ENCODE measurements at regions of chr16 and their contacts with region 1.

Region 1: DNA sequence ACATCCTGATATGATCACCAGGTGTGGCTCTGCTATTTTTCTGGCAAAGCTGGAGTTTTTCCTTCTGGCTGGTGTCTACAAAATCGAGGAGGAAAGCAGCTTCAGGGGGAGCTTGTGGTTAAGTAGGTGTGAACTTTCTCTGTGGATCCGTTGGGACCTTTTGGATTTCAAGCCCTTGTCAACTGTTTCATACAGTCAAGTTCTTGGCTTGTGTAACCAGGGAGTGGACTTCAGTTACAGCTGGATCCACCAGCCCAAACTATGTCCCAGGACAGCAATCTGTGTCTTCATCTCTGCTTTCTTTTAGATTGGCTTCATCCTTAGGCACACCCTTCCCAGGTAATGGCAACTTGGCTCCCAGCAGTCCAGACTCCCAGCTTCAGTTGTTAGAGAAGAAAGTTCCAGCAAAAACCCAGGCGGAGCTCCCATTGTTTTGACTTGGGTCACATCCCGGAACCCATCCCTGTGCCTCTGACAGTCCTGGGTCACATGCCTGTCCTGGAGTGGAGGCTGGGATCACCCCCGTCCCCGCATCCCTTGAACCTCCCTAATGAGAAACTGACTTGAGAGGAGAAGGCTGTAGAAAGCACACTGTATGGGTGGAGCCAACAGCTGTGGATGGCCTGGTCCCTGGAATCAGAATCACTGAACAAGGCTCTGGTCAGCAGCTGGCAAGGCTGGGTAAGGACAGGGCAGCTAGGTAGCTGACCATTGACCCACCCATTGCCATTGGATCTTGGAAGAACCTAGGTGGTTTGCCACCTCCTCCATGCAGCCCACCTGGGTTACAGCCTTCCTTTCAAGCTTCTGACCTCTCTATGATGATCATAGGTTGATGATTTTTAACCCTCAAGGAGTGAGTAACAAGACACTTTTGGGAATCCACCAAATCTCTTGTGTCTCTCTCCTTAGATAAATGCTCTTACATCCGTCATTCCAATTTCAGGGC is 18.1 kb downstream of the NKD1 start:
- DNase-seq: no peak
- H3K4me3 ChIP-seq: no peak overlapping the region
- H3K27ac ChIP-seq: no peak overlapping the region
- H3K4me1 ChIP-seq: peaks cover 3% of the 10 kb centered on the region
- H3K27me3 ChIP-seq: peaks cover 5% of the 10 kb centered on the region
- CTCF ChIP-seq: no peak

Region 2: DNA sequence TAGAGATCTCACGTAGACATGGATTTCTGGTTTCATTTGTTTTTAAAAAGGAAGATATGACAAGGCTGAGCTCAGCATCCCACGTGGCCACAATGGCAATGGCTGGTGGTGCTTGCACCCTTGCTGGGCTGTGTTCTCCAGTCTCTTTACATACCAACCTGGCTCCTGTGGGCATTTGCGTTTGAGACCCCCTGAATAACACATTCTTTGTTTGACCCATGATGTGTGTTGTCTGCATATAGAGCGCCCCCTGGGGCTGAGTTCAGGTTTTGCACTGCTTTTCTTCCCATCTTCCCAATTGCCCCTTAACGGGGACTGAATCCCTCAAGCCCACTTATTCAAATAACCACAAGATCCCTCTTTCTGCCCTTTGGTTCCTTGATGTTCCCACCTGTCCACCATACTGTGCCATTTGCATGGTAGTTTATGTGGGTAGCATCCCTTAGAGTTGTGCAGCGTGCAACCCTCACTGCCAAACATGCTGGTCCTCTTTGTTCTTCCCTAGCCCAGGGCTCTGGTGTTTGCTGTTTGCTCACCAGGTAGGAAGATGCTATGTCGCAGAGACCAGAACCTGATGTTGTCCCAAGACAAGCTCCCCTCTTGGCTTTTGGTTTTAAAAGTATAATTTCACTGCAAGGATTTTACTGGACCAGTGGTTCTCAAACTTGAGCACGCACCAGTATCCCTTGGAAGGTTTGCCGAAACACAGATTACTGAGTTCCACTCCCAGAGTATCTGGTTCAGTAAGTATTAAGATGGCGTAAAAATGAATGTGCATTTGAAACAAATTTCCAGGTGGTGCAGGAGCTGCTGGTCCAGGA is 56.6 kb before region 1 on chr16:
- CTCF ChIA-PET with region 1: interaction called, 16 read pairs
- POLR2A ChIA-PET with region 1: no interaction called
- intact Hi-C with region 1: no loop called
- DNase-seq: peak; percentile 35
- H3K4me3 ChIP-seq: no peak overlapping the region
- H3K27ac ChIP-seq: no peak overlapping the region
- H3K4me1 ChIP-seq: no peaks in the 10 kb centered on the region
- H3K27me3 ChIP-seq: no peaks in the 10 kb centered on the region
- CTCF ChIP-seq: peak; percentile 92

Region 3: DNA sequence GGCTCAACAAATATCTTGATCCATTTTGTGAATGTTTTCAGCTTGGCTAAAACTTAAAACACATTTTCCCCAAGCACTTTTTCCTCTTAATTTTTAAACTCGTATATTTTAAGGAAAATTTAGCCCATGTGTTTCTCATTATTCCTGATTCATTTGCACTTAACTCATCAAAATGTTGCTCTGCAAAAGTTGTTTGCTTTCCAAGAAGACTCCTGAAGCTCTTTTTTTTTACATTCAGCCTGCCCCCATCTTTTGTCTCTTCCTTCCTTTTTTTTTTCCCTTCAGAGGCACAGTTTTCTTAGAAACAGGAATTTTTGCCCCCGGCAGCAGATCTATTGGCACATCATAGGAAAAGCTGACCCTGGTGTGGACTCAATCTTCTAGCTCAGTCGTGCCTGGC is 739.8 kb after region 1 on chr16:
- CTCF ChIA-PET with region 1: no interaction called
- POLR2A ChIA-PET with region 1: no interaction called
- intact Hi-C with region 1: no loop called
- DNase-seq: no peak
- H3K4me3 ChIP-seq: no peak overlapping the region
- H3K27ac ChIP-seq: no peak overlapping the region
- H3K4me1 ChIP-seq: no peaks in the 10 kb centered on the region
- H3K27me3 ChIP-seq: no peaks in the 10 kb centered on the region
- CTCF ChIP-seq: no peak

Measured in A673 (cell line).